Kidney (tissue), 22 donors: ENCODE measurements at regions of chr2 and their contacts with region 1.

Region 1: DNA sequence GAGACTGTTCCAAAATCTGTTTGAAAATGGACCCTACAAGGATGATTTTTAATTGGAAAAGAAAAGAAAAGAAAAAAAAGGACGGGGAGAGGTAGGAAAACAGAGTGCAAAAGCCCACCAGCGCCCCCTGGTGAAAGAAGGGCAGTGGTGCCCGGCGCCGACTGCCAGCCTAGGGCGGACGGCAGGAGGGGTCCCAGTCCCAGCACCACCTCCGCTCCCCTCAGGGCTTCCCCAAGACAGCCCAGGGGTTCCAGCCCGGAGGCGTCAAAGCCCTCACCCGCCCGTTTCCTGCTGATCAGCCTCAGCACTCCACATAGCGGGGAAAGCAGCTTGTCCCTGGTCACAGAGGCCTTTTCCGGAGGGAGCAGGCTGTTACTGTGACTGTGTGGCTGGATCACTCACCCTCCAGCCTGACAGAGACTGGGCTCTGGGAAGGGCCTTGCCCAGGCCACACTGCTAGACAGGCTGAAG is 213.9 kb downstream of the TFCP2L1 start:
- DNase-seq: peak; percentile 74 to 86 (median 83)
- H3K4me3 ChIP-seq: no peak overlapping the region
- H3K27ac ChIP-seq: no peak overlapping the region
- H3K4me1 ChIP-seq: no peaks in the 10 kb centered on the region
- H3K27me3 ChIP-seq: no peaks in the 10 kb centered on the region
- CTCF ChIP-seq: peak; percentile 84

Region 2: GRCh38 chr2:120703330-120703994 is 367.6 kb before region 1 on chr2:
- intact Hi-C with region 1: loop called (anchors 5 kb)
- DNase-seq: no peak
- H3K4me3 ChIP-seq: no peak overlapping the region
- H3K27ac ChIP-seq: no peak overlapping the region
- H3K4me1 ChIP-seq: no peaks in the 10 kb centered on the region
- H3K27me3 ChIP-seq: no peaks in the 10 kb centered on the region
- CTCF ChIP-seq: no peak

Region 3: GRCh38 chr2:121699421-121700333 is 628.6 kb after region 1 on chr2:
- intact Hi-C with region 1: no loop called
- DNase-seq: peak in 3 of 5 donors; percentile 21 to 91 (median 38)
- H3K4me3 ChIP-seq: no peak overlapping the region
- H3K27ac ChIP-seq: no peak overlapping the region
- H3K4me1 ChIP-seq: peaks cover 0 to 8% (median 0%) of the 10 kb centered on the region in 3 donors
- H3K27me3 ChIP-seq: no peaks in the 10 kb centered on the region
- CTCF ChIP-seq: no peak